Prostate gland (tissue), 2 donors: ENCODE measurements at regions of chr11 and their contacts with region 1.

Region 1: DNA sequence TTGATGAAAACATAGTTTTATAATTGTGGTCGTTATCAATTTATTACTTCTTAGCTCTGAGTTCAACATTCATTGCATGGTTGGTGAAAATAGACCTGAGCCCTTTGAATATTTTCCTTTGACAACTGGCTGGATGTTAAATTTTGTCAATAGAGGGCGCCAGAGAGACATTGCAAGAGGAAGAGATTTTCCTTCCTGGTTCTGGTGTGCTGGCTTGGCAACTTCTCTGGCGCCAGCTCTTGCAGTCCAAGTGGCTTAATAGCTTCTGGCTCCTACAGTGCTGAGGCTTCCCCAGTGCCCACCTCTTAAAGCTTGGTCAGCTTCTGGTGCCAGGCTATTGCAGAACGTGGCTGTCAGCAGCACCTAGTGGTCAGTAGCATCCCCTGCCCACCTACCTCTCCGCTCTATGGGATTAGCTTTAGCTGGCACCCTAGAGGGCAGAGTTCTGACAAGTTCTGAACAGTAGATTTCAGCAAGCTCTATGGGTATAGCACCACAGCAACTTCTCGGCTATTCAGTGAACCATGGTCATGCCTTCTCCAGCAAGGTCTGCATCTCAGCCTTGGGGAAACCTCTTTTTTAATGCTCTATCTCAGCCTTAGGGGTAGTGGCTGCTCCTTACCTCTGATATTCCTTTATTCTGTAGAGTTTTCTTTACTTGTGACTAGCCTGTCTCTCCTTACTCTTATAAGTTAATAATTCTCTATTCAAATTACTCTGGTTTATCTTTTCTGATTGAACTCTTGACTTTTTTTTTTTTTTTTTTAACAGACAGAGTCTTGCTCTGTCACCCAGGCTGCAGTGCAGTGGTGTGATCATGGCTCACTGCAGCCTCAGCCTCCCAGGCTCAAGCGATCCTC is 59.4 kb downstream of the ACER3 start:
- DNase-seq: peak; percentile 88
- H3K4me3 ChIP-seq: no peak overlapping the region
- H3K27ac ChIP-seq: no peak overlapping the region
- H3K4me1 ChIP-seq: no peaks in the 10 kb centered on the region
- H3K27me3 ChIP-seq: no peaks in the 10 kb centered on the region
- CTCF ChIP-seq: peak; percentile 75 to 91 (median 86)
- POLR2A ChIP-seq: no peak

Region 2: GRCh38 chr11:76734456-76735420 is 185.4 kb before region 1 on chr11:
- intact Hi-C with region 1: loop called (anchors 5 kb)
- DNase-seq: peak; percentile 45
- H3K4me3 ChIP-seq: no peak overlapping the region
- H3K27ac ChIP-seq: peak overlapping the region in 1 of 2 donors; percentile 47
- H3K4me1 ChIP-seq: no peaks in the 10 kb centered on the region
- H3K27me3 ChIP-seq: no peaks in the 10 kb centered on the region
- CTCF ChIP-seq: no peak
- POLR2A ChIP-seq: no peak

Region 3: GRCh38 chr11:76788661-76789439 is 131.3 kb before region 1 on chr11:
- intact Hi-C with region 1: no loop called
- DNase-seq: peak; percentile 93
- H3K4me3 ChIP-seq: no peak overlapping the region
- H3K27ac ChIP-seq: peak overlapping the region; percentile 74 to 79
- H3K4me1 ChIP-seq: peaks cover 13% of the 10 kb centered on the region
- H3K27me3 ChIP-seq: no peaks in the 10 kb centered on the region
- CTCF ChIP-seq: peak in 1 of 4 experiments; percentile 37
- POLR2A ChIP-seq: no peak

Region 4: DNA sequence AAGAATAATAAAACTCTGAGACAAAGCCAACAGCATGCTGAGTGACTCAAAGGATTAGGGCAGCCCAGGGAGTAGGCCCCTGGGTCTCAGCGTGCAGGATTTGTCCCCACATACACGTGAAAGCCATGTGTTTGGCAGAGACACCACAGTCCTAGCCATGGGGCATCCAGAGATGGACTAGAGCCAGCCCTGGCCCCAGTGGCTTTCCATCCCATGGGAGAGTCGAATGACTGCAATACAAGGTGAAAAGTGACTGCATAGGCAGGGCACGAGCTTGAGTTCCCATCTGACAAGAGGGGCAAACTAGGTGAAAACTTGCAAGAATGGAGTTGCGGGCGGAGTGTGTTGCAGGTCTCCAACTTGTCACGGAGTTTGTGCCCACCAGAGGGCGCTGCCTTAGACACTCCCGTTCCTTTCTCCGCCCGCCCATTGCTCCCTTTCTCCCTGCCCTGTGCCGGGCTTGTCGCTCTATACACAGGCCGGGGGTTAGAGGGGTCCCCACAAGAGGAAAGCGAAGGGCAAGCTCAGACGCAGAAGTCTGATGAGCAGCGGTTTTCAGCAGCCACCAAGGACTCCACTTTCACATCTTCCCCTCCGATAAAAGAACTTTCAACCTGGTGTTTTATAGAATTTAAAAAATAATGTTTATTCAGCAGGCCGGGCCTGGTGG is 112.8 kb before region 1 on chr11:
- intact Hi-C with region 1: loop called (anchors 2 kb)
- DNase-seq: peak; percentile 88
- H3K4me3 ChIP-seq: no peak overlapping the region
- H3K27ac ChIP-seq: no peak overlapping the region
- H3K4me1 ChIP-seq: no peaks in the 10 kb centered on the region
- H3K27me3 ChIP-seq: no peaks in the 10 kb centered on the region
- CTCF ChIP-seq: peak; percentile 71 to 83 (median 76)
- POLR2A ChIP-seq: no peak

Region 5: GRCh38 chr11:77019976-77020595 is 100.0 kb after region 1 on chr11:
- intact Hi-C with region 1: no loop called
- DNase-seq: no peak
- H3K4me3 ChIP-seq: no peak overlapping the region
- H3K27ac ChIP-seq: no peak overlapping the region
- H3K4me1 ChIP-seq: no peaks in the 10 kb centered on the region
- H3K27me3 ChIP-seq: no peaks in the 10 kb centered on the region
- CTCF ChIP-seq: no peak
- POLR2A ChIP-seq: no peak

Region 6: GRCh38 chr11:77091146-77091940 is 171.2 kb after region 1 on chr11:
- intact Hi-C with region 1: loop called (anchors 10 kb)
- DNase-seq: peak; percentile 84
- H3K4me3 ChIP-seq: no peak overlapping the region
- H3K27ac ChIP-seq: no peak overlapping the region
- H3K4me1 ChIP-seq: peaks cover 10% of the 10 kb centered on the region
- H3K27me3 ChIP-seq: no peaks in the 10 kb centered on the region
- CTCF ChIP-seq: peak; percentile 88 to 96 (median 95)
- POLR2A ChIP-seq: no peak

Region 7: GRCh38 chr11:77187776-77188632 is 267.9 kb after region 1 on chr11:
- intact Hi-C with region 1: no loop called
- DNase-seq: peak; percentile 72
- H3K4me3 ChIP-seq: no peak overlapping the region
- H3K27ac ChIP-seq: no peak overlapping the region
- H3K4me1 ChIP-seq: no peaks in the 10 kb centered on the region
- H3K27me3 ChIP-seq: no peaks in the 10 kb centered on the region
- CTCF ChIP-seq: peak; percentile 41 to 84 (median 76)
- POLR2A ChIP-seq: no peak